ENCODE measurements at regions of chr9 and their contacts with region 1.

Region 1: GRCh38 chr9:14616188-14616982 is 76.8 kb downstream of the ZDHHC21 start:
- DNase-seq: no peak
- H3K4me3 ChIP-seq: no peak overlapping the region
- H3K27ac ChIP-seq: no peak overlapping the region
- H3K4me1 ChIP-seq: no peaks in the 10 kb centered on the region
- H3K27me3 ChIP-seq: no peaks in the 10 kb centered on the region
- CTCF ChIP-seq: peak in 3 of 4 experiments; percentile 58 to 72 (median 59)
- POLR2A ChIP-seq: no peak

Region 2: GRCh38 chr9:14322211-14323082 is 293.9 kb before region 1 on chr9:
- intact Hi-C with region 1: no loop called
- DNase-seq: peak; percentile 93
- H3K4me3 ChIP-seq: peak overlapping the region; percentile 59 to 67
- H3K27ac ChIP-seq: peak overlapping the region; percentile 98 to 99
- H3K4me1 ChIP-seq: no peaks in the 10 kb centered on the region
- H3K27me3 ChIP-seq: no peaks in the 10 kb centered on the region
- CTCF ChIP-seq: peak; percentile 46 to 92 (median 58)
- POLR2A ChIP-seq: peak; percentile 70

Region 3: GRCh38 chr9:14395317-14396082 is 220.9 kb before region 1 on chr9:
- intact Hi-C with region 1: no loop called
- DNase-seq: no peak
- H3K4me3 ChIP-seq: no peak overlapping the region
- H3K27ac ChIP-seq: no peak overlapping the region
- H3K4me1 ChIP-seq: no peaks in the 10 kb centered on the region
- H3K27me3 ChIP-seq: no peaks in the 10 kb centered on the region
- CTCF ChIP-seq: no peak
- POLR2A ChIP-seq: no peak

Region 4: DNA sequence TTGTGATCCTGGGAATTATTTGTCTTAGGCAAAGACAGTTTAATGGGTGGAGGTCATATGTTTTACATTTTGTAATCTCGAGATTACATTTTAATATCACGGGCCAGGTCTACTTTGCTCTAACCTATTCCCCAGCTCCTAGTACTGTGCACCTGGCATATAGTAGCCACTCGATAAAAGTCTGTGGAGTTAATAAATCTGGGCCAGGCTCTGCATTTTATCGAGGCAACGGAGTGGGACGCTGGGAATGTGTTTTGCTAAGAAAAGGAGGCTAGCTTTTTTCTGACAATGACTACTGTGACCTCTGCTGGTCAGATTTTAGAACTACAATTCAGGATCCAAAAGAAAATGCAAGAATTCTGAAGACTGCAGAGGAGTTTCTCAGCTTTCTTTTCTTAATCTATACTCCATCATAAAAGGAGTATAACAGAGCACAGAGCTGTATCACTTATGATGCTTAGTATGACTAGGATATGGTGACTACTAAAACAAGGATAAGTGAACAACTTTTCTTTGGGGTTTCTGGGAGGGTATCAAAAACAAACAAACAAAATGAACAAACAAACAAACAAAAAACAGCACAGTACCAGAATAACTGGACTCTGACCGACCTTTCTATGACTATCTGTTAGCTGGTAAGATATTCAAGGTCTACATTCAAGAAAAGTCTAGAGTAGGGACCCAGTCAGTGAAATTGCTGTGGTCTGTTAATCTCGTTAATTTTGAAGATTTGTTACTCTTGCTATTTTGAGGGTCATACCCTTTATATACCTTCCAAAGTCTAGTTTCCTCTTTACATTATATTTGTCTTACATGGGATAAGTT is 152.2 kb after region 1 on chr9:
- intact Hi-C with region 1: loop called (anchors 2 kb)
- DNase-seq: peak; percentile 13
- H3K4me3 ChIP-seq: no peak overlapping the region
- H3K27ac ChIP-seq: no peak overlapping the region
- H3K4me1 ChIP-seq: no peaks in the 10 kb centered on the region
- H3K27me3 ChIP-seq: no peaks in the 10 kb centered on the region
- CTCF ChIP-seq: peak; percentile 29 to 65 (median 56)
- POLR2A ChIP-seq: no peak

Measured in prostate gland (tissue), 2 donors.